Heart left ventricle (tissue), 16 donors: ENCODE measurements at regions of chr7 and their contacts with region 1.

Region 1: DNA sequence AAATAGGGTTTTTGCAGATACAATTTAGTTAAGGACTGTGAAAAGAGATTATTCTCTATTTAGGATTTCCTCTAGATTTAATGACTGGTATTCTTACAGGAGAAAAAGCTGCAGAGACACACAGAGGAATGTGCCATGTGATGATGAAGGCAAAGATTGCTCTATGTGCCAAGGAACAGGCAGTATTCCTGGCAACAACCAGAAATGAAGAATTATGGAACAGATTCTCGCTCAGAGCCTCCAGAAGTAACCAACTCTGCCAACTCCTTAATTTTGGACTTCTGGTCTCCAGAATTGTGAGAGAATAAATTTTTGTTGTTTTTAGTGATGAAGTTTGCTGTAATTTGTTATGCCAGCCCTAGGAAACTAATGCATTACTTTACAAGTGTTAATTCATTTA is 307.6 kb upstream of the SEMA3A start:
- DNase-seq: no peak
- ATAC-seq: no peak
- H3K4me3 ChIP-seq: no peak overlapping the region
- H3K27ac ChIP-seq: no peak overlapping the region
- H3K4me1 ChIP-seq: no peaks in the 10 kb centered on the region
- H3K27me3 ChIP-seq: no peaks in the 10 kb centered on the region
- CTCF ChIP-seq: no peak
- POLR2A ChIP-seq: no peak

Region 2: GRCh38 chr7:84105586-84105985 is 396.7 kb before region 1 on chr7:
- intact Hi-C with region 1: no loop called
- DNase-seq: no peak
- ATAC-seq: no peak
- H3K4me3 ChIP-seq: no peak overlapping the region
- H3K27ac ChIP-seq: no peak overlapping the region
- H3K4me1 ChIP-seq: no peaks in the 10 kb centered on the region
- H3K27me3 ChIP-seq: no peaks in the 10 kb centered on the region
- CTCF ChIP-seq: no peak
- POLR2A ChIP-seq: no peak

Region 3: GRCh38 chr7:84454174-84454959 is 47.9 kb before region 1 on chr7:
- intact Hi-C with region 1: loop called in 1 of 10 experiments (anchors 5 kb)
- DNase-seq: no peak
- ATAC-seq: no peak
- H3K4me3 ChIP-seq: no peak overlapping the region
- H3K27ac ChIP-seq: no peak overlapping the region
- H3K4me1 ChIP-seq: no peaks in the 10 kb centered on the region
- H3K27me3 ChIP-seq: no peaks in the 10 kb centered on the region
- CTCF ChIP-seq: no peak
- POLR2A ChIP-seq: no peak

Region 4: GRCh38 chr7:84603545-84603944 is 101.3 kb after region 1 on chr7:
- intact Hi-C with region 1: no loop called
- DNase-seq: no peak
- ATAC-seq: no peak
- H3K4me3 ChIP-seq: no peak overlapping the region
- H3K27ac ChIP-seq: no peak overlapping the region
- H3K4me1 ChIP-seq: no peaks in the 10 kb centered on the region
- H3K27me3 ChIP-seq: no peaks in the 10 kb centered on the region
- CTCF ChIP-seq: no peak
- POLR2A ChIP-seq: no peak